ENCODE measurements at regions of chr6 and their contacts with region 1.

Region 1: DNA sequence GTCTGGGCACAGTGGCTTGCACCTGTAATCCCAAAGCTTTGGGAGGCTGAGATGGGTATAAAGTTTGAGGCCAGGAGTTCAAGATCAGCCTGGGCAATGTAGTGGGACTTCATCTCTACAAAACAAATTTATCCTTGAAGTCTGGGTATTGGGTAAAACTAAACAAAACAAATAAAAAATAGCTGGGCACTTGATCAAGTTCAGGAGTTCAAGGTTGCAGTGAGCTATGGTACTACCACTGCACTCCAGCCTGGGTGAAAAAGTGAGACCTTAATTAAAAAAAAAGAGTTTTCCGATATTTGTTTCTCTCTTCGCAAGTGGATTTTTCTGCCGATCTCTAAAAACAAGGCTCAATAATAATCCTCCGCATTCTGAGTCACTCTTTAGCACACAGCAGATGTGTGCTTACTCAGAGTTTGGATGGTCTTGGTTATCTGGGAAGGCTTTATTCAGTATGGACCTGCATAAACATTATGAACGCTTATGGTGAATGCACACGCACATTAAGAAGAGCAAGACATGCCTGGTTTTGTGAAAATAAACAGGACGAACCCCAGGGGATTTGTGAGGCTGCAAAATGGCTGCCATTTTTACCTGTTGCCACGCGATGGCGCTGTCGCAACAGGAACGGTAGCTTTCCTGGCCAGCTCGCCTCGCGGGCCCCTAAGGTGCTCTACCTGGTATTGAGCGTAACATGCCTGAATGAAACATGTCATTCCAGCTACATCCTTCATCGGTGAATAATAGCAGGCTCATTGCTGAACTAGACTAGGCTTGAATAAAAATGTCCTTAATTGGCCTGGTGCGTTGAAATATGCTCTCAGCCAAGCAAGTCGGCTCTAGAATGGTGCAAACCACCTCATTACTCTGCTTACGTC is 6.0 kb downstream of the OPN5 start:
- DNase-seq: peak; percentile 66
- ATAC-seq: peak; percentile 82
- H3K4me3 Mint-ChIP-seq: no peak overlapping the region
- H3K27ac Mint-ChIP-seq: no peak overlapping the region
- H3K4me1 Mint-ChIP-seq: peaks cover 2% of the 10 kb centered on the region
- H3K27me3 Mint-ChIP-seq: peaks cover 29% of the 10 kb centered on the region
- CTCF ChIP-seq: peak; percentile 92

Region 2: GRCh38 chr6:47376930-47377329 is 410.9 kb before region 1 on chr6:
- CTCF ChIA-PET with region 1: no interaction called
- POLR2A ChIA-PET with region 1: no interaction called
- intact Hi-C with region 1: no loop called
- DNase-seq: peak; percentile 48
- ATAC-seq: peak; percentile 80
- H3K4me3 Mint-ChIP-seq: no peak overlapping the region
- H3K27ac Mint-ChIP-seq: peak overlapping the region; percentile 32
- H3K4me1 Mint-ChIP-seq: no peaks in the 10 kb centered on the region
- H3K27me3 Mint-ChIP-seq: no peaks in the 10 kb centered on the region
- CTCF ChIP-seq: no peak

Region 3: DNA sequence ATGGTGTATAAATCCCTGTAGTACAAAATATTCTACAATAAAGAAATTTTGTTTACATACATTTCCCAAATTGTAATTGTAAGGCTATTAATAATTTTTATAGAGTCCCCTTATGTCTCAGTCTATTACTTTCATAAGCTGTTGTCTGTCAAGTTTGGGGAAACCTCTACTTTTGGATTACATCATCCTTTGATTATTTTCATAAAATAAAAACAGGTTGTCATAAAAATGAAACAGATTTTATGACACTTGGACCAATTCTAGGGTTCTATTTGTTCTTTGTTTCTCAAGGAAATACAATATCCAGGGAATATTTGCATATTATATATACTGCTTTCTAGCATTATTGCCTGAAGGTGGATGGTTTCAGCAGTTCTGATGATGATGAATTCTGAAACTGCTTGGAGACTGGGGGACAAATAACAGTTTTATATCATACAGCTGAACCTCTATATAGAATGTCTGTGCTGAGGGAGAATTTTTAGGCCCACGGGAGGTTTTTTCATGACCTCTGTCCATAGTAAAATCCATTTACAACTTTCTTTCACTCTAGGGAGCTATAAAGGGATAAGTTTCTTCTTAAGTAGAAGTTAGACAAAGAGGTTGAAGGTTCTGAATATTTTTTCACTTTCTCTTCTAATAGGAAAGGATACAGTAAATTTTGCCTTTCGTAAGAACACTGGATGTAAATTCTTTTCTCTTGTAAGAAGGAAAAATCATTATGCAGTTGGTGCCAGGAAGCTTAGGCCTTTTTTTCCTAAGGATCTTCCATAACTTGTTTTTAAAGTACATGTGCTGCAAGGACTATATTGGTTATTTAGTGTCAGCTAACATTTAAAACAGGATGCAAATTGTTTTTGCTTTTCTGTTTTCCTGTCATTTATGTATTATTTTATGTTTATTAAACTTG is 252.3 kb before region 1 on chr6:
- CTCF ChIA-PET with region 1: no interaction called
- POLR2A ChIA-PET with region 1: no interaction called
- intact Hi-C with region 1: no loop called
- DNase-seq: no peak
- ATAC-seq: no peak
- H3K4me3 Mint-ChIP-seq: no peak overlapping the region
- H3K27ac Mint-ChIP-seq: no peak overlapping the region
- H3K4me1 Mint-ChIP-seq: peaks cover 17% of the 10 kb centered on the region
- H3K27me3 Mint-ChIP-seq: no peaks in the 10 kb centered on the region
- CTCF ChIP-seq: no peak

Region 4: GRCh38 chr6:47773005-47773404 is 14.9 kb before region 1 on chr6:
- CTCF ChIA-PET with region 1: interaction called, 15 read pairs
- POLR2A ChIA-PET with region 1: no interaction called
- intact Hi-C with region 1: no loop called
- DNase-seq: no peak
- ATAC-seq: no peak
- H3K4me3 Mint-ChIP-seq: no peak overlapping the region
- H3K27ac Mint-ChIP-seq: no peak overlapping the region
- H3K4me1 Mint-ChIP-seq: no peaks in the 10 kb centered on the region
- H3K27me3 Mint-ChIP-seq: peaks cover 3% of the 10 kb centered on the region
- CTCF ChIP-seq: no peak

Region 5: DNA sequence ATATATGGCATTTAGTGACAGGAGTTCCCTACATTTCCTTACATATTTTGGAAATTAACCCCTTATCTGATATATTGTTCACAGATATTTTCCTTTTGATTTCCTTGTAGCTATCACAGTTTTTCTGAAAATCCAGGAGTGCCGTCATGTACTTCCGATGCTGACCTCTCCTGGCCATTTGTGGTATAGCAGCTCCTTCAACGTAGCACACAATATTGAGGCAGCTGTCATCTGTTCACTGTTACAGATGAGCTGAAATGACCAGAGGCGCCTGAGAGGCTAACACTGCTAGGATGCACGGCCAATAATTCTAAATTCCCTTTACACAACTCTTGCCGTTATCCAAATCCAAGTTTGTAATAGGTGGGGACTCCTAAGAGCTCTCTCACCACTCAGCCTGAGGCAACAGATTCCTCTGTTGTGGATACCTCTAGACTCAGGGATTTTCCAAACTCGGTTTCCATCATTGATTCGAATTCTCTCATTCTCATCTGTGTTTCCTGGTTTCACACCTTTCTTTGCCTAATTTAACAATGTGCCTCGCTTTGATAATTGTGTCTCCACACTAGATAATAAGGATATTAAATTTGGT is 1622.2 kb after region 1 on chr6:
- CTCF ChIA-PET with region 1: interaction called, 21 read pairs
- POLR2A ChIA-PET with region 1: no interaction called
- intact Hi-C with region 1: no loop called
- DNase-seq: peak; percentile 81
- ATAC-seq: peak; percentile 84
- H3K4me3 Mint-ChIP-seq: no peak overlapping the region
- H3K27ac Mint-ChIP-seq: no peak overlapping the region
- H3K4me1 Mint-ChIP-seq: no peaks in the 10 kb centered on the region
- H3K27me3 Mint-ChIP-seq: peaks cover 1% of the 10 kb centered on the region
- CTCF ChIP-seq: peak; percentile 74

Measured in activated CD8-positive, alpha-beta T cell treated with anti-CD3 and anti-CD28 coated beads for 36 hours (primary cell).